ENCODE measurements at regions of chr11 and their contacts with region 1.

Region 1: DNA sequence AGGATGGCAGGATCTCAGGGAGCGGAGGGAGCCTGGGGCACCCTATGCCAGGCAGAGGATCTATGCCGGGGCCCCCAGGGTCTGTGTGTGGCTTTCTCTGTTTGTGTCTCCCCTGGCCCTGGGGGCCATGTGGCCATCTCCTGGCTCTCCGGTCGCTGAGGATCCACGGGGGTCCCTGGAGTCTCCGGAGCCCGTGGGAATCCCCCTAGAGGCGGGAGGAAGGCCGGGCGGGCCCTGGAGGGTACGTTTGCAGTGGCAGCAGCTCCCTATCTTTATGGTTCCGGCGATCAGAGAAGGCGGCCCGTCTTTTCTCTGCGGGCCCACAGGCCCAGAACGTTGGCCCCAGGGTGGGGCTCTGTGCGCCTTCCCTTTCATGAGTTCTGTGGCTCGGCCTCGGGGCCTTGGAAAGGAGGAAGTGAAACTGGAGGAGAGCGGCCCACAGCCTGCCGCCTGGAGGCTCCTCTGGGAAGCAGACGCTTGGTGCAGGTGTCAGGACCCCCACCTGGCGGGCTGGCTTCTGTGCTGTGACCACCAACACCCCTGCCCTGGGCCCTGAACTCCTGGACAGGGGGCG is 82.1 kb downstream of the KCNQ1 start:
- DNase-seq: peak; percentile 9 to 38 (median 18)
- H3K4me3 ChIP-seq: no peak overlapping the region
- H3K27ac ChIP-seq: no peak overlapping the region
- H3K4me1 ChIP-seq: no peaks in the 10 kb centered on the region
- H3K27me3 ChIP-seq: no peaks in the 10 kb centered on the region
- CTCF ChIP-seq: no peak
- EP300 ChIP-seq: no peak
- POLR2A ChIP-seq: no peak

Region 2: DNA sequence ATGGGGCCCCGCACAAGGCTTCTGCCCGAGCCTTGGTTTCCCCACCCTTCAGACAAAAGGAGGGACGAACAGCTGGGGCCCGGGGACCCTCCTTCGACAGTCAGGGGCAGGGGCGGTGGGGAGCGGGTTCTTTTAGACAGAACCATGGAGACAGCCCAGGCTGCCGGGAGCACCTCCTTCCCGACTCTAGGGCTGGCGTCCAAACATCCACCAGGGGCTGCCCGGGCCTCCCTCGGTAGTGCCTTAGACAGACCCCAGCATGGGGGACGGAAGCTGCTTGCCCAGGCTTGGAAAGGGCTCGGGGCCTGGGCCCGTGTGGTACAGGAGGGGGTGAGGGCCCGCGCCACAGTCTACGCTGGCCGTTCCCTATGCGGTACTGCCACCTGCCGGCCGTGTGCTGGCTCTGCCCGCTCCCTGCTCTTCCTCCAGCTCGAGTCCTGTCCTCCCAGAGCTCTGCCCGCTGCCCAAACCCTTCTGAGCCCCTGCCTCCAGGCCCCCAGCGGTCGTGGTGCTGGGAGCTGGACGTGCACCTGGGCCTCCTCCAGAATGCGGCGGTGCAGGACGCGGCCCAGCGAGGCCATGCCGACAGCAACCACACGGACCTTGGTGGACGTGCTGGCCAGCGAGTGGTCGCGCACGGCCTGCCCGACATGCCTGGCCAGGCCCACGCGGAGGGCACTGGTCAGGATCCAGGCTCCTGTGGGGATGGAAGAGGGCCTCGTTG is 106.2 kb before region 1 on chr11:
- intact Hi-C with region 1: loop called in 2 of 4 experiments (anchors 10 kb)
- DNase-seq: peak; percentile 66 to 86 (median 75)
- H3K4me3 ChIP-seq: no peak overlapping the region
- H3K27ac ChIP-seq: no peak overlapping the region
- H3K4me1 ChIP-seq: peaks cover 2% of the 10 kb centered on the region
- H3K27me3 ChIP-seq: no peaks in the 10 kb centered on the region
- CTCF ChIP-seq: peak; percentile 90 to 94 (median 92)
- EP300 ChIP-seq: no peak
- POLR2A ChIP-seq: peak; percentile 11

Region 3: DNA sequence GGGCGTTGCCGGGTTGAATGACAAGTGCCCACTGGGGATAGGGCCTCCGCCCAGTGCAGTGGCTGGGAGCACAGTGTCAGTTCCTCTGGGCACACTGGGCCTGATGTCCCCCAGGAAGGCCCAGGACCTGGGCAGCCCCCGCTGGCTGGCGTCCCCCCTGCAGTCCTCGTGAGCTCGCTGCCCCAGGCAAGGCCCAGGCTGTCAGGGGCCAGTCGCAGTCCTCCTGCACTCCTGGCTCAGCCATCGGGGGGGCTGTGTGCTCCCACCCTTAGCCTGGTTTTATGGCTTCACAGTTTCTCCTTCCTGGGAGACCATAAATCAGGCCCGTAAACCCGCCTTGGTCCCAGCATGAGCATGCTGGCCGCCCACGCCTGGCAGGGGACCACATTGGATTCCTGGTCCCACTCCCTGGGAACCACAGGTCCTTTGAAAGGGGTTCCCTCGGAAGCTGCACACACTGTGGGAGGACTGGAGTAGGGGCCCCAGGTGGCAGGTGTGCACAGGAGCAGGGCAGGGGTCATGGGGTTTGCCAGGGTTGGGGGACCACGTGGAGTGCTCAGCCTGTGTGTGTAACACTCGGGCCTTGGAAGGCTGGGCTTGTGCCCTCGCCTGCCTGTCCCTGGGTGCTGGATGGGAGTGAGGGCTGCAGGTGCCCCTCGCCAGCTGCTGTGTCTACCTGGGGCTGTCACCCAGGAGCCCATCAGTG is 59.3 kb after region 1 on chr11:
- intact Hi-C with region 1: no loop called
- DNase-seq: peak in 4 of 5 donors; percentile 6 to 23 (median 10)
- H3K4me3 ChIP-seq: no peak overlapping the region
- H3K27ac ChIP-seq: no peak overlapping the region
- H3K4me1 ChIP-seq: no peaks in the 10 kb centered on the region
- H3K27me3 ChIP-seq: no peaks in the 10 kb centered on the region
- CTCF ChIP-seq: no peak
- EP300 ChIP-seq: no peak
- POLR2A ChIP-seq: no peak

Region 4: DNA sequence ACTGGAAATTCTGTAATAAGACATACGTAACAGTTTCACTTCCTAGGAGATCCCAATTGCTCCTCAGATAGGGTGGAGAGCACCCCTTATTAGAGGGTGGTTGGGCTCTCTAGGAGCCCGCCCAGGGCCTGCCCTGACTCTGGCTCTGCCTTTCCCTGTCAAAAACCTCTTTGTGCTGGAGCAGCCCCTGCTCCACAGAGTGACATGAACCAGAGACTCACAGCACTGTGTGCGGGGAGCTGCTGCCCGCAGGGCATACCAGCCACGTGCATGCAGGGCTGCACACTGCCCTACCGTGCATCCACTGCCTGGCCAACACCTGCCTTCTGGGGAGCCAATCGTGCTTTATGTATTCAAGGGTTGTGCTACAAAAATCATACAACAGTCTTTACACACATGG is 148.6 kb after region 1 on chr11:
- intact Hi-C with region 1: no loop called
- DNase-seq: peak in 1 of 5 donors; percentile 11
- H3K4me3 ChIP-seq: no peak overlapping the region
- H3K27ac ChIP-seq: peak overlapping the region in 1 of 2 donors; percentile 54
- H3K4me1 ChIP-seq: peaks cover 16% of the 10 kb centered on the region
- H3K27me3 ChIP-seq: no peaks in the 10 kb centered on the region
- CTCF ChIP-seq: no peak
- EP300 ChIP-seq: no peak
- POLR2A ChIP-seq: no peak

Measured in ovary (tissue), 10 donors.